Right ventricle myocardium superior (tissue), 1 donor: ENCODE measurements at regions of chr11 and their contacts with region 1.

Region 1: GRCh38 chr11:45846974-45847910 is at the start of gene CRY2:
- DNase-seq: peak; percentile 100
- ATAC-seq: peak; percentile 96
- total RNA-seq, gene CRY2: 68.3 TPM

Region 2: GRCh38 chr11:45917286-45917622 is 70.0 kb after region 1 on chr11:
- intact Hi-C with region 1: no loop called
- DNase-seq: no peak
- ATAC-seq: no peak

Region 3: DNA sequence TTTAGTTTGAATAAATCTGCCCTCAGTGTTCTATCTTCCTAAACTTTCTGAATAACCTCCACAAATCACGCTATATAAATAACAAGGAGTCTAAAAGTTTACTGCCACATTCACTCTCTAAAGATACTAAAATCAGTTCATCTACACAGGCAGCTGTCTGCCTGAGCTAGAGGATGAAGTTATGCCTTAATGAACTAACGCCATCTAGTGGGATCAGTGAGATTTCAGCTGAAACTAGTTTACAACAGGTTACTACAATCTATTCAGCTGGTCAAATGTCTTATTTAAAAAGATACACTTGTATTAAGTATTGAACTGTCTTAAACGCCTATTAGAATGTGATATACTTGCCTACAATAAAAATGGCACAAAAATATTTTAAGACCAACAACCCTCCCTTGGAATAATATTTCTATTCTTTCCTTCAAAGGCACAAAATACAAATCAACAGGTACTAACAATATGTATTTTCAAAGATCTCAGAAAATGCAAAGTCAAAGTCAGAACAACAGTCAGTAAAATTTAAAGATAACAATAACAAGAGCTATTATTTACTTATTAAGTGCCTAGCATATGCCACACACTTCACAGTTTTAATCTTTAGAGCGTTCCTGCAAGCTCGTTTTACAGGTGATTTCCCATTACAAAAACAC is 159.3 kb after region 1 on chr11:
- intact Hi-C with region 1: loop called (anchors 10 kb)
- DNase-seq: no peak
- ATAC-seq: peak; percentile 89

Region 4: DNA sequence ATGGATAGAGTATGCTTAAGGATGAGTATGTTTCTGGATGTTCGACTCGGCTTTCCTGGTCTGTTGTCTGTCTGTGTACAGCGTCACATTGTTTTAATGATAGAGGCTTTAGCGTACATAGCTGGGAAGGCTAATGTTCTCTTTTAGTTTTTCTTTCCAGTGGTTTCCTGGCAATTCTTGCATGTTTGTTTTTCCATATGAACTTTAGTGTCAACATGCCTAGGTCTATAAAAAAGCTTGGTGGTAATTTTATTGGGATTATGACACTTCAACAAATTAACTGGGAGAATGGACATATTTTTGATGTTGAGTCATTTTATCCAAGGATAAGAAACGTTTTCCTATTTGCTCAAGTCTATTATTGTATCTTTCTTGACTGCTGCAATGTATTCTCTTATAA is 889.4 kb after region 1 on chr11:
- intact Hi-C with region 1: no loop called
- DNase-seq: no peak
- ATAC-seq: no peak